Heart left ventricle (tissue), 16 donors: ENCODE measurements at regions of chr7 and their contacts with region 1.

Region 1: DNA sequence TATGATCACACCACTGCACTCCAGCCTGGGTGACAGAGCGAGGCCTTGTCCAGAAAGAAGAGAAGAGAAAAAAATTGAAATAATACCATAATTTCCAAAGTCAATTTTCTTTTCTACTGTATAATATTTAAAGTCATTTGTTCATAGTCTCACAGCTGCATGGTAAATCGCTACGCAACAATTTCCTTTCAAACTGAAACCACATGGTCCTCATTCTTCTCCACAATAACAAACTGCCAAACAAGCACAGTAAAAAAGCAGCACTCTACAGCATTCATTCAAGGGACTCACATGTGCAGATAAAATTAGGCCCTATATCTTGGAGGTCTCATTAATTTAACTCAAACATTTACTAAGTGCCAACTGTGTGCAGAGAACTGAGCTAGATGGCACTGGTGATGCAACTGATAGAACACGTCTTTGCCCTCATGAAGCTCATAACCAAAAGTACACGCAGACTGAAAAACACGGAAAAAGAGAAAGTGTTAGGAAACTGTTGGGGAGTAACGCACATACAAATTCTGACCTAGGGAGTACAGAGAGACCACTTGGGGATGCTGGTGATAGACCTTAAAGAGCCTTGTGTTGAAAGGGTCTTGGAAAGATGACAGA is 68.4 kb upstream of the SRRM3 start:
- DNase-seq: no peak
- ATAC-seq: no peak
- H3K4me3 ChIP-seq: no peak overlapping the region
- H3K27ac ChIP-seq: no peak overlapping the region
- H3K4me1 ChIP-seq: peaks cover 0 to 10% (median 0%) of the 10 kb centered on the region in 12 donors
- H3K27me3 ChIP-seq: peaks cover 0 to 11% (median 0%) of the 10 kb centered on the region in 9 donors
- CTCF ChIP-seq: no peak
- POLR2A ChIP-seq: no peak

Region 2: GRCh38 chr7:75866489-75867389 is 266.5 kb before region 1 on chr7:
- intact Hi-C with region 1: loop called in 3 of 10 experiments (anchors 10 kb)
- DNase-seq: peak in 4 of 5 donors; percentile 50 to 67 (median 66)
- ATAC-seq: peak; percentile 77 to 93 (median 91)
- H3K4me3 ChIP-seq: no peak overlapping the region
- H3K27ac ChIP-seq: no peak overlapping the region
- H3K4me1 ChIP-seq: peaks cover 0 to 15% (median 3%) of the 10 kb centered on the region in 12 donors
- H3K27me3 ChIP-seq: no peaks in the 10 kb centered on the region
- CTCF ChIP-seq: peak; percentile 83 to 96 (median 91)
- POLR2A ChIP-seq: no peak

Region 3: GRCh38 chr7:76037310-76037709 is 96.0 kb before region 1 on chr7:
- intact Hi-C with region 1: loop called in 2 of 10 experiments (anchors 10 kb)
- DNase-seq: no peak
- ATAC-seq: peak in 1 of 4 donors; percentile 54
- H3K4me3 ChIP-seq: no peak overlapping the region
- H3K27ac ChIP-seq: no peak overlapping the region
- H3K4me1 ChIP-seq: peaks cover 0 to 7% (median 0%) of the 10 kb centered on the region in 12 donors
- H3K27me3 ChIP-seq: no peaks in the 10 kb centered on the region
- CTCF ChIP-seq: no peak
- POLR2A ChIP-seq: no peak

Region 4: DNA sequence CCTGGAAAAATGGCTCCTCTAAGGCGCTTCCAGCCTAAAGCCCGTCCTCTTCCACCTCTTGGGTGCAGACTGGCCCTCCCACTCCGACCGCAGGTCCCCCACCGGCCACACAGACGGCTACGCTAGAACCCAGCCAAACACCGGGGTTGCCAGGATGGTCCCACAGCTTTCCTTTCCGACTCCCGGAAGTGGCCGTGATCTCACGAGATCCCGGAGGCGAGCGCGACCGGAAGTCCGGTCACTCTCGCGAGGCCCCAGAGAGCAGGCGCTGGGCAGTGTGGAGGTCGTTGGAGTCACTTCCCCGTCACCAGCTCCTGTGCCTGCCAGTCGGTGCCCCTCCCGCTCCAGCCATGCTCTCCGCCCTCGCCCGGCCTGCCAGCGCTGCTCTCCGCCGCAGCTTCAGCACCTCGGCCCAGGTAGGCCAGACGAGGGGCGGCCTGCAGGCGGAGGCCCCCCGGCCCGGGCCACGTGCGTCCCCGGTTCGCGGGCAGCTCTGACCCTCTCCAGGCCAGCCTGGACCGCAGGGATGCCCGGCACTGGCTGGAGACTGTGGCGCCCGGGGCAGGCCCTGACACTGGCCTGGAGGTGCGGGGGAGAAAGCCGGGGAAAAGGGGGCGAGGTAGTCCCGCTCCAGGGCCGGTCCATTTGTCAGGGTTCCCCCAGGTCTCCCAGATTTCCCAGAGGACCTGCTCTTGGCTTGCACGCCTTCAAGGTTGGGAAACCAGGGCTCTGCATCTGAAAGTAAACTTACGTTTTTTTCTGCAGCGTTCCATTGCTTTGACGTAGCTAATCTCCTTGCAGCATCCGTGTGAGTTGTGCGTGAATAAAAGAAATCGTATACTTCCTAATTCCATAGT is 85.2 kb before region 1 on chr7 and contains the starts of genes MDH2 and STYXL1:
- intact Hi-C with region 1: loop called in 2 of 10 experiments (anchors 10 kb)
- DNase-seq: peak; percentile 95 to 98 (median 96)
- ATAC-seq: peak; percentile 96 to 98 (median 98)
- H3K4me3 ChIP-seq: peak within 1 kb of the TSS; percentile 68 to 100 (median 90)
- H3K27ac ChIP-seq: peak within 1 kb of the TSS; percentile 80 to 98 (median 94)
- H3K4me1 ChIP-seq: peaks cover 0 to 59% (median 29%) of the 10 kb centered on the region in 12 donors
- H3K27me3 ChIP-seq: no peaks in the 10 kb centered on the region
- CTCF ChIP-seq: no peak
- POLR2A ChIP-seq: peak; percentile 12 to 83
- total RNA-seq, gene MDH2: 303 to 591 (median 409) TPM
- total RNA-seq, gene STYXL1: 7.9 to 26.8 (median 16.1) TPM

Region 5: GRCh38 chr7:76054128-76055120 is 78.8 kb before region 1 on chr7:
- intact Hi-C with region 1: loop called in 2 of 10 experiments (anchors 10 kb)
- DNase-seq: no peak
- ATAC-seq: peak; percentile 6 to 51 (median 32)
- H3K4me3 ChIP-seq: no peak overlapping the region
- H3K27ac ChIP-seq: peak overlapping the region in 3 of 12 donors; percentile 36 to 54 (median 38)
- H3K4me1 ChIP-seq: peaks cover 0 to 73% (median 23%) of the 10 kb centered on the region in 12 donors
- H3K27me3 ChIP-seq: no peaks in the 10 kb centered on the region
- CTCF ChIP-seq: no peak
- POLR2A ChIP-seq: no peak

Region 6: GRCh38 chr7:76086070-76086469 is 47.2 kb before region 1 on chr7:
- intact Hi-C with region 1: no loop called
- DNase-seq: no peak
- ATAC-seq: no peak
- H3K4me3 ChIP-seq: no peak overlapping the region
- H3K27ac ChIP-seq: no peak overlapping the region
- H3K4me1 ChIP-seq: peaks cover 0 to 3% (median 0%) of the 10 kb centered on the region in 12 donors
- H3K27me3 ChIP-seq: peaks cover 0 to 3% (median 0%) of the 10 kb centered on the region in 9 donors
- CTCF ChIP-seq: no peak
- POLR2A ChIP-seq: no peak